ENCODE measurements at regions of chr10 and their contacts with region 1.

Region 1: DNA sequence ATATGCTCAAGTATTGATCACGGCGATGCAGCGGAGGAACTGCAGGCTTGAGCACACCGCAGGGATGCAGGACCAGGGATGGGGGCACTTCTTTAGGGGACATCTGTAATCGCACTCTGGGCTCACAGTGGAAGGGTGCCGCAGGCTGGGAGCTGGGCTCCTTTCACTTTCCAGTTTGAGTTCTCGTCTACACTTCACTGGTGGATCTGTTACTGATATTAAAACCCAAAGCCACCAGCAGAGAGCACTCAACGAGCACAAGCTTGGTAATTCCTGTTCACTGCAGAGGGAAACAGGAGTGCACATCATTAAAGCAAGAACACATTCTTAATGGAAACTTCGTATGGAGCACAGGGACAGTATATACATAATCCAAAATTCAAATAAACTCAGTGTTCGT is 91.3 kb downstream of the PARD3 start:
- DNase-seq: no peak
- H3K4me3 ChIP-seq: 0 out of 2 replicates have a peak overlapping the region, but pooled peaks have one; percentile 9
- CTCF ChIP-seq: peak; percentile 44

Region 2: DNA sequence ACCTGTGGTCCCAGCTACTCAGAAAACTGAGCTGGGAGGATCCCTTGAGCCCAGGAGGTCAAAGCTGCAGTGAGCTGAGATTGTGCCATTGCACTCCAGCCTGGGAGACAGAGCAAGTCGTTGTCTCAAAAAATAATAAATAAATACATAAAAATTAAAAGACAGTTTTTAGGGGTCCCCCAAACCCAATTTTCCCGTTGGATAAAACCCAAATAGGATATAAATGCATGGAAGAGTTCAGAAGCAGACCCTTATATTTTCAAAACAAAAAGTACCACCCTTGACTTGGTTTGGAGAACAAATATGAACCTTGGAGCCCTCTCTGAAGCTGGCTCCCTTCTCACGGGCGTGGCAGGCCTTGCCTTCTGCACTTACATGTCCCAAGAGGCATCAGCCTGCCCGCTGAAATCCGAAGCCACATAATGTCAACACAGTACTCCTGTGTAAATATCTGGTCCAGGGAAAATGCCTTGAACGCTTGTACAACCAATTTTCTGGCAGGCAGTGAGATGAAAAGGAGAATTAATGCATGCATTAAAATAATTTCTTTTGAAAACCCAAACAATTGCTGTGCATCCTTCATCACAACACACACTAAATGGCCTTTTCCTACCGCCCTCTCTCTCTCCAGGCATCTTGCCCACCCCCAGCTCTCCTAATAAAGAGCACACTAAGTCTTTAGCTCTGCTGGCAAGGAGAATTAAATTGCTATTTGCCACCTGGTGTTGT is 137.7 kb after region 1 on chr10:
- CTCF ChIA-PET with region 1: no interaction called
- POLR2A ChIA-PET with region 1: no interaction called
- DNase-seq: no peak
- H3K4me3 ChIP-seq: no peak overlapping the region
- CTCF ChIP-seq: no peak

Region 3: DNA sequence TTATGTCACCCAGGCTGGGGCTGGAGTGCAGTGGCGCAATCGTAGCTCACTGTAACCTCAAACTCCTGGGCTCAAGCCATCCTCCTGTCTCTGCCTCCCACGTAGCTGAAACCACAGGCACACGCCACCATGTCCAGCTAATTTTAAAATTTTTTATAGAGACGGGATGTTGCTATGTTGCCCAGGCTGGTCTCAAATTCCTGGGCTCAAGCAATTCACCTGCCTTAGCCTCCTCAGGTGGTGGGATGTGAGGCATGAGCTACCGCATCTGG is 214.6 kb after region 1 on chr10:
- CTCF ChIA-PET with region 1: interaction called, 10 read pairs
- POLR2A ChIA-PET with region 1: no interaction called
- DNase-seq: no peak
- H3K4me3 ChIP-seq: no peak overlapping the region
- CTCF ChIP-seq: no peak

Region 4: DNA sequence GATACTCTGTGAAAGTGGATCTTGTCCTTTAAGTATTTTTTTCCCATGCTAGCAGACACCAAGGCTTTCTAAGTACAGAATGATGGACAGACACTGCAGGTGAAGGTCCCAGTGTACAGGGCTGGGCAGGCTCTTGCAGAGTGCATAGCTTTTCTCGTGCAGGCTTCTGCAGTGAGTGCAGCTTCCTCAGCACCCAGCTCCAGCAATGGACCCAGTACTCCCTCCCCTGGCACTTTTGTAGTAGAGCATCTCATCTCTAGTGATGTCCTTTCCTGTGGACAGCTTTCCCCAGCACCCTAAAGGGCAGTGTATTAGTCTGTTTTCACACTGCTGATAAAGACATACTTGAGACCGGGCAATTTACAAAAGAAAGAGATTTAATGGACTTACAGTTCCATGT is 262.1 kb after region 1 on chr10:
- CTCF ChIA-PET with region 1: interaction called, 19 read pairs
- POLR2A ChIA-PET with region 1: no interaction called
- DNase-seq: no peak
- H3K4me3 ChIP-seq: no peak overlapping the region
- CTCF ChIP-seq: peak; percentile 42